Activated CD8-positive, alpha-beta T cell treated with anti-CD3 and anti-CD28 coated beads, Interleukin-2, amount 10 ng/mL, durations not matched to agents 7 days and 5 days (primary cell): ENCODE measurements at regions of chr11 and their contacts with region 1.

Region 1: DNA sequence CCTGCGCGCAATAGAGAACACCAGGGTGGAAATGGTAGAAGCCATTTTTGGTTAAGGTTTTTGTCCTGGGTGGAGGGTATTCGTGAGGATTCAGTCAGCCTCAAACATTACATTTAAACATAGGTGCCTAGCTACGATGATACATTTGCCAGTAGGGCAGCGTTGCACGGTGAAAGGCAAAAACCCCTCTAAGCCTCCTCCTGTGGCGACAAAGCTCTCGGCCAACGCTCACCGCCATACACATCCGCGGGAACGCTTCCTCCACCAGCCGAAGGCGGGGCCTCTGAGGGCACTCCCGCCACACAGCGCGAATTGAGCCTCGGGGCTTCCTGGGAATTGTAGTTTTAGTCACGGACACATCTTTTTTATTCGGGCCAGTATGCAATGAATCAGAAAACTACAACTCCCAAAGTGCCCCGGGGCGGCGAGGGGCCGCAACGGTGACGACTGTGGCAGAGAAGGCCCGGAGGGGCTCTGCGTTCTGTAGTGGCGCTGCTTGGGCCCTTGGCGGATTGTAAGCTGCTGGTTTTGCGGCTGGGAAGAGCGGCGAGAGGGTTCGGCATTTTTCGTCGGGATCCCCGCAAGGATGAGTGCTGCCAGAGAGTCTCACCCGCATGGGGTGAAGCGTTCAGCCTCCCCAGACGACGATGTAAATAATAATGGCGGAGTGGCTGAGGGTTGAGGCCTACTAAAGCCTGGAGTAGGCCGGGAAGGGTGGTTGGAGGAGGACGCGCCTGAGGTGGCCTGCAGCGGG is at the start of gene C11orf58:
- DNase-seq: peak; percentile 96
- ATAC-seq: peak; percentile 98
- H3K4me3 Mint-ChIP-seq: no peak within 1 kb of the TSS
- H3K27ac Mint-ChIP-seq: peak within 1 kb of the TSS; percentile 80
- H3K4me1 Mint-ChIP-seq: peaks cover 17% of the 10 kb centered on the region
- H3K27me3 Mint-ChIP-seq: no peaks in the 10 kb centered on the region
- total RNA-seq, gene C11orf58: 104 to 111 TPM

Region 2: DNA sequence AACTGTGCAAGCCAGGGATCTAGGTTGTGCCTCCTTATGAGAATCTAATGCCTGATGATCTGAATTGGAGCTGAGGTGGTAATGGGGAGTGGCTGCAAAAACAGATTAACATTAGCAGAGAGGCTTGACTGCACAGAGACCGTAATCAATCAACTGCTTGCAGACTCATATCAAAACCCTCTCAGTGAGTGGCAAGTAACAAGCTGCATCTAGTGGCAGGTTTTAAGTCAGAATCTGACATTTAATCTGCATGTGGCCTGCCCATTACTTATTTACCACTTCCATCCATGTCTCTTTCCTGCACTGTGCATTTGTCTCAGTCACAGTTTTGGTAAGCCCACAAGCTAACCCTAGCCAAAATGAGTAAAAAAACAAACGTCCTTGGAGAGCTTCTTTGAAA is 11.3 kb after region 1 on chr11:
- CTCF ChIA-PET with region 1: interaction called, 21 read pairs
- POLR2A ChIA-PET with region 1: interaction called, 39 read pairs
- DNase-seq: no peak
- ATAC-seq: no peak
- H3K4me3 Mint-ChIP-seq: no peak overlapping the region
- H3K27ac Mint-ChIP-seq: no peak overlapping the region
- H3K4me1 Mint-ChIP-seq: peaks cover 4% of the 10 kb centered on the region
- H3K27me3 Mint-ChIP-seq: no peaks in the 10 kb centered on the region

Region 3: DNA sequence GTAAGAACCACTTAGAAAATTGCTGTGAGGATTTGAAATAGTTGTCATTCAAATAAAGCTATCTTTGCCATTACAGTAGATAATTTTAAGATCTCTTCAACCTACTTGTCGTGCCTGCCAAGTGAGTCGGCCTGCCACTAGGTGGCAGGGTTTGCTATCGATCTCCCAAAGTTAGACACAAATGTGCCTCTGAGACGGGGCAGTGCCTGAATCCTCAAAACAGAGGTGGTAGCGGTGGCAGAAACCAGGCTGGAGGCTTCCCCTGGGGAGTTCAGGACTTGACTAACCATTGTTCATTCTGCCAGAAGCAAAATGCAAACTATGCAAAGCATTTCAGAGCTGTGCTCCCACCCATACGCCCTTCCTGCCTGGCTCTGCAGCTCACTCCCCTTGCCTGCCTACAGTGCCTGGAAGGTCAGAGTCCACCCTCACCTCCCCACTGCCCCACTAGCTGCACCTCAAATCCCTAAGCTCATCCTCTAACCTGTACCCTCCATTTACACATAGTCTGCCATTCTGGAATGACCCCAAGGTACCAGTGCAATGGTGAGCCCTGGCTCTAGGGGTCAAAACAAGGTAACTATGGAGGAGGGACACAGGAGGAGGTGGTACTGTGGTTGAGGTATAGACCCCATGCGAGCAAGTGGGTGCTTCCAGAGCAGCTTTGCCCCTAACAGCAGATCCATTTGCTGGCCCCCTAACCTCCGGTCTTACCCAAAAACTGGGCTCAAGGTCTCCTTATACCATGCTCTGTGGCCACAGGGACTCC is 82.1 kb after region 1 on chr11:
- CTCF ChIA-PET with region 1: no interaction called
- POLR2A ChIA-PET with region 1: no interaction called
- DNase-seq: peak; percentile 76
- ATAC-seq: no peak
- H3K4me3 Mint-ChIP-seq: no peak overlapping the region
- H3K27ac Mint-ChIP-seq: no peak overlapping the region
- H3K4me1 Mint-ChIP-seq: no peaks in the 10 kb centered on the region
- H3K27me3 Mint-ChIP-seq: peaks cover 9% of the 10 kb centered on the region

Region 4: DNA sequence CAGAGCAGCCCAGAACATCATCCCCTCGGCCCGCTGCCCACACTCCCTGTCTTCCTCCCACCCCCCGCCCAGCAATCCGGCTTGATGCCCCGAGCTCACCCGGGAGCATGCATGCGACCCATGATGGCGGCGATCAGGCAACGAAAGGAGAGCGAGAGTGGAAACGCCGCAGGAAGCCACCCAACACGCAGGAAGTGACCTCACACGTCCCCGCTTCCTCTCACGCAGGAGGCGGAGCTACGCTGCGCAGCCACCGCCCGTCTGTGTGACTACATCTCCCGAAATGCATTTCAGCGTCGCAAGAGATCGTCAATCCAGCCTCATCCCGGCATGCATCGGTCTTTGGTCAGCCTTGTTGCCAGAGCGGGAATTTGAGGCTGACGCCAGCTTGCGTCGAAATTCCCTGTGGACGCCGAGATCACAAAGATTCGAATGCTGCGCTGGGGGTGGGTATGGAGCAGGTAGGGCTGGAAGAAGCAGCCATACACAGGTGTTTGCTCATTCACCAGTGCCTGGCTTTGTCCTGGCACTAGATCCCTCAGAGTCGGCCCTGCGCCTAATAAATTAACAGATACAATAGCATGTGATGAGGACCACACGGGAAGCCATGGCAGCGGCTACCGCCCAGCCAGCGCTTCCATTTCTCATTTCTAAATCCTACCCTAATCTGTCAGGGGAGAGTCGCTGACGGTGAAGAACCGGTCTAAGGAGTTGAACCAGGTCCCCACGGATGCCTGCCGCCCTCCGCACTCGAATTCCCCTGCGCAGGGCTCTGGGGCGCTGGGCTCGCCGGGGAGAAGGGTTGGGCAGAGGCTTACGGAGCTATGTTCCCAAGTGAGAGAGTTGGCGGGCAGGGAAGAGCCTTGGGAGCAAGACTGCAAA is 339.4 kb after region 1 on chr11 and contains the start of gene RPS13:
- CTCF ChIA-PET with region 1: no interaction called
- POLR2A ChIA-PET with region 1: interaction called, 12 read pairs
- DNase-seq: peak; percentile 97
- ATAC-seq: peak; percentile 92
- H3K4me3 Mint-ChIP-seq: peak within 1 kb of the TSS; percentile 96
- H3K27ac Mint-ChIP-seq: peak within 1 kb of the TSS; percentile 99
- H3K4me1 Mint-ChIP-seq: peaks cover 36% of the 10 kb centered on the region
- H3K27me3 Mint-ChIP-seq: no peaks in the 10 kb centered on the region
- total RNA-seq, gene RPS13: 986 to 1,008 TPM